Sciatic nerve (tissue), 2 donors: ENCODE measurements at regions of chr18 and their contacts with region 1.

Region 1: GRCh38 chr18:55844382-55844781 is 256.4 kb upstream of the TCF4 start:
- DNase-seq: no peak
- ATAC-seq: no peak

Region 2: GRCh38 chr18:55477499-55477859 is 366.9 kb before region 1 on chr18:
- intact Hi-C with region 1: loop called (anchors 10 kb)
- DNase-seq: no peak
- ATAC-seq: peak; percentile 85

Region 3: DNA sequence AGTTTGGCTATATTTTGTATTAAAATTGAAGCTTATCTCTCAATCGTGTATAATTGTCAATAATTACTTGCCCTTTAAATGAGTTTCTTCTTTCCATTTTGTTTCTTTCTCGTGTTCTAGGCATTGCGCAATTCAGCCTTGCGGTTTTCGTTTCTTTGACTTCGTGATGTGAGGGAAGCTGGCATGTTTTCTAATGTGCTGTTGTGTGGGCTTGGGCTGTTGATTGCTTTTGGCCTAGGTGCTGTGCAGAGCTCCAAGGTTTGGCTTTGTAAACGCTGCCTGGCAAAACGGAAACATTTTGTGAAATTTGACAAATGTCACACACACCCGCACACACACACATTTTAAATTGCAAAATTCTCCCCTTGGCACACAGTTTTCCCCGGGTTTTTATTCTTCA is 13.8 kb before region 1 on chr18:
- intact Hi-C with region 1: loop called (anchors 1 kb)
- DNase-seq: no peak
- ATAC-seq: no peak

Region 4: DNA sequence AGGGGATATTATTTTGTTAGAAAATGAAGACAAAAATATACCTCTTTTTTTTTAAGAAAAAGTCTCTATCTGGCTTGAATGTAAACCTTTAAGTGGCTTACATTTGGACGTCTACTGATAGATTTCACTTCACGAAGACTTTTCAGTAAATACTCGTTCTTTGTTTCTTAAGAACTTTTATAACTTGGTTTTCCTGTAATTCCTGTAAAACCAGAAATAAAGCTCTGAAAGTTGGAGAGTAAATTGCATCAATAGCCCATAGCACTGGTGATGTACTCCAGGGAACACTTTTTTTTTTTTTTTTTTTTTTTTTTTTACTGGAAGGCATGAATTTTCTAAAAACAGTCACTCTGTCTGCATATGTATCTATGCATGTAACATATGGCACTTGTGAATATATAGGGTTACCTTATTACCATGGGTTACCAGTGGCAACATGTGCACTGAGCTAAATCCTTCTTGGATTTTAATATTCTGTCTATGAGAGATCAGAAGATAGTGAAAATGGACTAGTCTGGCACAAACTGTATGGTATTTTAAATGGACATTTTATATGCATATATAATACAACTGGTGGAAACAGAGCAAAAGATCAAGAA is 52.8 kb after region 1 on chr18:
- intact Hi-C with region 1: loop called (anchors 10 kb)
- DNase-seq: no peak
- ATAC-seq: no peak